GM12878 (cell line): ENCODE measurements at regions of chr7 and their contacts with region 1.

Region 1: GRCh38 chr7:91835846-91836368 is 44.6 kb downstream of the MTERF1 start:
- DNase-seq: no peak
- ATAC-seq: no peak
- H3K4me3 ChIP-seq: no peak overlapping the region
- H3K27ac ChIP-seq: no peak overlapping the region
- H3K4me1 ChIP-seq: no peaks in the 10 kb centered on the region
- H3K27me3 ChIP-seq: no peaks in the 10 kb centered on the region
- CTCF ChIP-seq: no peak
- EP300 ChIP-seq: no peak
- POLR2A ChIP-seq: no peak
- RAD21 ChIP-seq: no peak

Region 2: DNA sequence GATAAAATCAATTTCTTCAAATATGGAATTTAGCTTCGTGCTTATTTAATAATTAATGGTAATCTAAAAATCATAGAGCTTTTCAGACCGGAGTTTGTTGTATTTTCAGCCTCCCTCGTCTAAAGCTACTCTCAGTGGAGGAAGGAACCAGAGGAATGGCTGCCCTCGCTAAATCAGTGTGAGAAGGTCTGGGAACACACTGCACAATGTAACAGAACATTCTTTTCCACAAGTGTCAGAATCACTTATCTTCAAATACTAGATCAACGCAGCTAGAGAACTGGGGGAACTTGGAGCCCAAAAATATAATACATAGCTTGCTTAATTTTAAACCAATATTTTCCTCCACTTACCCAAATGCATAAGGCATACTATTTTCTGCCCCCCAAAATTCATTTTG is 103.9 kb before region 1 on chr7:
- CTCF ChIA-PET with region 1: no interaction called
- POLR2A ChIA-PET with region 1: no interaction called
- RAD21 ChIA-PET with region 1: no interaction called
- SMC1A ChIA-PET with region 1: no interaction called
- in situ Hi-C with region 1: no loop called
- intact Hi-C with region 1: no loop called
- DNase-seq: no peak
- ATAC-seq: no peak
- H3K4me3 ChIP-seq: no peak overlapping the region
- H3K27ac ChIP-seq: no peak overlapping the region
- H3K4me1 ChIP-seq: no peaks in the 10 kb centered on the region
- H3K27me3 ChIP-seq: no peaks in the 10 kb centered on the region
- CTCF ChIP-seq: no peak
- EP300 ChIP-seq: no peak
- POLR2A ChIP-seq: no peak
- RAD21 ChIP-seq: no peak

Region 3: GRCh38 chr7:91852263-91852741 is 16.4 kb after region 1 on chr7:
- CTCF ChIA-PET with region 1: interaction called, 49 read pairs
- POLR2A ChIA-PET with region 1: no interaction called
- RAD21 ChIA-PET with region 1: interaction called, 7 read pairs
- SMC1A ChIA-PET with region 1: interaction called, 7 read pairs
- in situ Hi-C with region 1: no loop called
- intact Hi-C with region 1: no loop called
- DNase-seq: no peak
- ATAC-seq: peak; percentile 91
- H3K4me3 ChIP-seq: no peak overlapping the region
- H3K27ac ChIP-seq: no peak overlapping the region
- H3K4me1 ChIP-seq: no peaks in the 10 kb centered on the region
- H3K27me3 ChIP-seq: no peaks in the 10 kb centered on the region
- CTCF ChIP-seq: peak; percentile 41 to 48 (median 44); a peak in 5 of 6 replicates
- EP300 ChIP-seq: no peak
- POLR2A ChIP-seq: no peak
- RAD21 ChIP-seq: peak; percentile 42